T-cell (primary cell): ENCODE measurements at regions of chr10 and their contacts with region 1.

Region 1: DNA sequence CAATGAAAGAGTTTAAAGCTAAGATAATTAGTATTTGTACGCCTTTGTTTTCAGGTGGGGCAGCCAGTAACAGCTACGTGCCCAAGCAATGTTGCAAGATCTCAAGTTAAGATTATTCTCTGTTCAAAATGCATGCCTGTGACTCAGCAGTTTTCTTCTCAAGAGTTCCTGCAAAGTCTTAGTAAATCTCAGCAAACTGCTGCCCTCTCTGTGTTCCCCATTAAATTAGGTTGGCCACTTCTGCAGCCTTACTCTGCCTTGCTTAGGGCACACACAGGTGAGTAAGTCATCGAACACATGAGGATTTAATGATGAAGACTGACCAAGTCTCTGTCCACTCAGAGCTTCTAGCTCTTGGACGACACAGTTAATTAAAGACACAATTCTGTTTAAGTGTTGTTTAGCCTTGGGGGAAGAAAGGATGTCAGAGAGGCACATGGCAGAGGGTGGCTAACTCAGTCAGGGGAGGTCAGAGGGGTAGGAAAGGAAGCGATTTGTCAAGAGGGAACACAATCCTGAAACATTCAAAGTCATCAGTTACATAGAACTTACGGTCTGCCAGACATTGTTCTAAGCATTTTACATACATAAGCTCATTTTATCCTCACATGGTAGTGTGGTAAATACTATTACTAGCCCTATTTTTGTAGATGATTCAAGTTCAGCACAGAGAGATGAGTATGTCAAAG is 20.2 kb upstream of the SLC35G1 start:
- DNase-seq: no peak
- ATAC-seq: no peak
- H3K4me3 ChIP-seq: no peak overlapping the region
- H3K4me3 Mint-ChIP-seq: no peak overlapping the region
- H3K27ac ChIP-seq: no peak overlapping the region
- H3K27ac Mint-ChIP-seq: no peak overlapping the region
- H3K4me1 ChIP-seq: no peaks in the 10 kb centered on the region
- H3K4me1 Mint-ChIP-seq: no peaks in the 10 kb centered on the region
- H3K27me3 ChIP-seq: peaks cover 0 to 5% of the 10 kb centered on the region in 2 experiments
- H3K27me3 Mint-ChIP-seq: peaks cover 20 to 40% of the 10 kb centered on the region in 2 donors

Region 2: DNA sequence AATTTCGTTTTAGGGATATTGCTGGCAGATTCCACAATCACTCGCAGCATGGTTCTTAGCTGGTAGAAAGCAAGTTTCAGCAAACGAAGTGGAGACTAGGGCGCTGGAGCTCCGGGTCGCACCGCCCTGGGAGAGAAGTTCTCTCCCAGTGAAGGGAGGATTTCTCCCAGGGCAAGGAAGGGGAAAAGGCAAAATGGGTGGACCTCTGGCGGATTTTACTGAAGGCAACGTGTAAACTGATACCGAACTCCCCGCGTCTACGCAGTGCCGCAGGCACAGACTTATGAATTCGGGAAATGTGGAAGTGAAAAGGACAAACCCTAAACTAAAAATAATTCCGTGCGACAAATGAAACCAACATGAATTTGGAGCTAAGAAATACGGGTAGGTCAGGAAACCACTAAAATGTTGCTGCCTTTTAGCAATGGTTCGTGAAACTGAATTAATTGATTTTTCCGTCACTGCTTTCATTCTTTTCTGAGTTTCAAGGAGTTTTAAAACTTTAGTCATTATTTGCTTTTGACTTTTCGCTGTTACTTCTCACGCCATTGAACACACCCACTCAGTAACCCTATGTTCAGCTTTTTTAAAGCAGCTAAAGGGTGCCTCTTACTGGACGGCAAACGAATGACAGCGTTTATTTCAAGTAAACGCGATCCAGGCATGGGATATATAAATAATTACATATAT is 391.3 kb before region 1 on chr10 and contains the start of gene MYOF:
- CTCF ChIA-PET with region 1: no interaction called
- POLR2A ChIA-PET with region 1: no interaction called
- DNase-seq: peak in 30 of 35 experiments; percentile 13 to 80 (median 36)
- ATAC-seq: peak; percentile 89 to 96 (median 91)
- H3K4me3 ChIP-seq: peak within 1 kb of the TSS; percentile 50 to 88
- H3K4me3 Mint-ChIP-seq: peak within 1 kb of the TSS; percentile 77 to 88 (median 86)
- H3K27ac ChIP-seq: no peak within 1 kb of the TSS
- H3K27ac Mint-ChIP-seq: no peak within 1 kb of the TSS
- H3K4me1 ChIP-seq: peaks cover 3 to 7% of the 10 kb centered on the region in 2 experiments
- H3K4me1 Mint-ChIP-seq: peaks cover 10 to 12% (median 12%) of the 10 kb centered on the region in 3 donors
- H3K27me3 ChIP-seq: peaks cover 8 to 10% of the 10 kb centered on the region in 2 experiments
- H3K27me3 Mint-ChIP-seq: peaks cover 21 to 28% of the 10 kb centered on the region in 2 donors
- total RNA-seq, gene MYOF: 0.65 to 1.1 (median 0.86) TPM

Region 3: DNA sequence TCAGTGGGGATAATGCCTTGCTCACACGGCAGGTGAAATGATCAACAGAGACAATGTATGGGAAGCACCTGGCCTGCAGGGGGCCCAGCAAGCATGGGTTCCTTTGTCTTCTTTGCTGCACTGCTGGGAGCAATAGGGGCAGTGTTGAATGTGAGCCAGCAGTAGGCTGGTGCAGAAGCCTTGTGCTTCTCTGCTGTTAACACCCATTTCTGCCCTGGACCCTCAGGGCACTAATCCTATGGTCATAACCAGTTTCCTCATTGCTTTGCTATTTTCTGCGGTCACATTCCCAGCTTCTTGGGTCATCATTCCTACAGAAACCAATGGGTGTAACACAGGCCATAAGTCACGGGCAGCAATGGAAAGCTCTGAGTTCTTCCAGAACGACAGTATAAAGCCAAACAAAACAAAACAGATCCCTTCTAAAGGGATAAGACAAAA is 126.7 kb before region 1 on chr10:
- CTCF ChIA-PET with region 1: no interaction called
- POLR2A ChIA-PET with region 1: no interaction called
- DNase-seq: peak in 2 of 35 experiments; percentile 8 to 9
- ATAC-seq: peak in 1 of 4 experiments; percentile 34
- H3K4me3 ChIP-seq: no peak overlapping the region
- H3K4me3 Mint-ChIP-seq: no peak overlapping the region
- H3K27ac ChIP-seq: no peak overlapping the region
- H3K27ac Mint-ChIP-seq: no peak overlapping the region
- H3K4me1 ChIP-seq: peaks cover 0 to 1% of the 10 kb centered on the region in 2 experiments
- H3K4me1 Mint-ChIP-seq: peaks cover 3 to 8% (median 6%) of the 10 kb centered on the region in 3 donors
- H3K27me3 ChIP-seq: peaks cover 0 to 11% of the 10 kb centered on the region in 2 experiments
- H3K27me3 Mint-ChIP-seq: peaks cover 13 to 22% of the 10 kb centered on the region in 2 donors

Region 4: GRCh38 chr10:93838278-93838677 is 35.3 kb before region 1 on chr10:
- CTCF ChIA-PET with region 1: no interaction called
- POLR2A ChIA-PET with region 1: no interaction called
- DNase-seq: no peak
- ATAC-seq: no peak
- H3K4me3 ChIP-seq: no peak overlapping the region
- H3K4me3 Mint-ChIP-seq: no peak overlapping the region
- H3K27ac ChIP-seq: no peak overlapping the region
- H3K27ac Mint-ChIP-seq: no peak overlapping the region
- H3K4me1 ChIP-seq: no peaks in the 10 kb centered on the region
- H3K4me1 Mint-ChIP-seq: no peaks in the 10 kb centered on the region
- H3K27me3 ChIP-seq: peaks cover 0 to 4% of the 10 kb centered on the region in 2 experiments
- H3K27me3 Mint-ChIP-seq: peaks cover 3 to 15% of the 10 kb centered on the region in 2 donors

Region 5: GRCh38 chr10:93916257-93917063 is 42.9 kb after region 1 on chr10:
- CTCF ChIA-PET with region 1: interaction called in 1 of 2 experiments, 10 read pairs
- POLR2A ChIA-PET with region 1: no interaction called
- DNase-seq: peak in 1 of 35 experiments; percentile 6
- ATAC-seq: no peak
- H3K4me3 ChIP-seq: no peak overlapping the region
- H3K4me3 Mint-ChIP-seq: peak overlapping the region in 1 of 3 donors; percentile 16
- H3K27ac ChIP-seq: no peak overlapping the region
- H3K27ac Mint-ChIP-seq: no peak overlapping the region
- H3K4me1 ChIP-seq: no peaks in the 10 kb centered on the region
- H3K4me1 Mint-ChIP-seq: peaks cover 0 to 5% (median 0%) of the 10 kb centered on the region in 3 donors
- H3K27me3 ChIP-seq: no peaks in the 10 kb centered on the region
- H3K27me3 Mint-ChIP-seq: no peaks in the 10 kb centered on the region